CD4-positive, alpha-beta memory T cell (primary cell): ENCODE measurements at regions of chr1 and their contacts with region 1.

Region 1: DNA sequence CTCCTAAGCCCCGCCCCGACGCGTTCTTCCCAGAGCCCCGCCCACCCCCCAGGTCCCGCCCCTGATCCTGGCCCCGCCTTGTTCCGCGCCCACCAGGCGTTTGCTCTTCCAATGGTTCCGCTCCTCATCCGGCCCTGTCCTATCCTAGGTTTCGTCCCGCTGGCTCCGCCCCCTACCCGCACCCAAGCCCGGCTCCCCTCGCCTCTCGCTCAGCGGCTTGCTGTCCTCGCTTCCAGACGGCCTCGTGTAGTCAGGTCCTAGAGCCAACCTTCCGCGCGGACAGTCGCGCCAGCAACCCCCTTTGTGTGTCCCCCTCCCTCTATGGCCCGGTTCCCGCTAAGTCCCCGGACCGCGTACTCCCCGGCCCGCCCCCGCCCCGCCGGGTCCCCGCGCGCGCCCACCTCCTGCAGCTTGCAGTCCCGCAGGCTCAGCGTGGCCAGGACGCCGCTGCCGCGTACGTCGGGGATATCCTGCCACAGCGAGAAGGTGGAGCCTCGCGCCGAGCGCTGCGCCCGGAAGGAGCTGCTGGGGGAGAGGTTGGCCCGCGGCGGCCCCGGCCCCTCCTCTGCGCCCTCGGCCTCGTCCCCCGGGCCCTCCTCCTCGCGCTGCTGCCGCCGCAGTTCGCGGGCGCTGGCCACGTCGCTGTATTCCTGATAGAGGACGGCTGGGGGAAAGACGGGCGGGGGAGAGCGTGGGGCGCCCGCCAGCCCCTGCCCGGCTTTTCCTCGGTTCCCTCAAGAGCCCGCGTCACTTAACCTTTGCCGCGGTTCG is 5.7 kb downstream of the ARHGEF19 start:
- DNase-seq: peak; percentile 93 to 97 (median 94)
- H3K4me3 ChIP-seq: peak overlapping the region; percentile 52 to 61
- H3K4me3 Mint-ChIP-seq: peak overlapping the region; percentile 89 to 97 (median 90)
- H3K27ac ChIP-seq: peak overlapping the region; percentile 76
- H3K27ac Mint-ChIP-seq: peak overlapping the region; percentile 94 to 98 (median 97)
- H3K4me1 ChIP-seq: peaks cover 20% of the 10 kb centered on the region
- H3K4me1 Mint-ChIP-seq: peaks cover 1 to 36% (median 16%) of the 10 kb centered on the region in 4 donors
- H3K27me3 ChIP-seq: no peaks in the 10 kb centered on the region
- H3K27me3 Mint-ChIP-seq: no peaks in the 10 kb centered on the region

Region 2: DNA sequence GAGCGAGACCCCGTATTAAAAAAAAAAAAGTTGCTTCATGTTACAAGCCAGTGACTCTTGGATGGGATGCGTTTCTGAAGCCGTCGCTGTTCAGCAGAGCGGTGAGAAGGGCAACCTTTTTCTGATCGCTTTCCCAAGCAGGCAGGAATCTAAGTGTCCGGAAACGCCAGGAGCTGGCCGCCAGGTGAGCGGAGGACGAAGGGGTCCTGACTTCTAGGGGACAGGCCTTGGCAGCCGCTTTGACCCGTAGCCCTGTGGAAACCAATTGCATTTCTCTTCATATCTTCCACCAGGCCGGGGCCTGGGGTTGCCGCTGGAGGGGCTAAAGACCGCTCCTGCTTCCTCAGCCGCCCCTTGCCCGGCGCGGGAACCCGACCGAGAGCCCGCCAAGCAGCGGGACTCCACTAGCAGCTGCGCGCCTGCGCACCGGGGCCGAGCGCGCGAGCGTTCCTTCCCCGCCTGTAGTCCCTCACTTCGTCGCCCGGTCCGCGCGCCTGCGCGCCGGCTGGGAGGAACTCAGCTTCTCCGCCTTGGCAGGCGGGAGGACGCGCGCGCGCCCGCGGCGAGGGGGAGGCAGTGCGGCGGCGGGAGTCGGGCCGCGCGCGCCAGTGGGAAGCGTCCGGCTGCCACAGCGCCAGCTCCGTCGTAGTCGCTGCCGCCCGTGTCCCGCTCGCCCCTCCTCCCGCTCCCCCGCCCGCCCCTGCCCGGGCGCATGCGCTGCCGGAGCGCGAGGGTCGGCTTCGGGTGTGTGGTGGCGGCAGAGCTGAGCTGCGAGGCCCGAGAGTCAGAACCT is 359.4 kb before region 1 on chr1 and contains the start of gene SPEN:
- CTCF ChIA-PET with region 1: no interaction called
- POLR2A ChIA-PET with region 1: no interaction called
- intact Hi-C with region 1: loop called (anchors 5 kb)
- DNase-seq: peak; percentile 98 to 99 (median 99)
- H3K4me3 ChIP-seq: peak within 1 kb of the TSS; percentile 62 to 65
- H3K4me3 Mint-ChIP-seq: peak within 1 kb of the TSS; percentile 95 to 99 (median 98)
- H3K27ac ChIP-seq: peak within 1 kb of the TSS; percentile 86
- H3K27ac Mint-ChIP-seq: peak within 1 kb of the TSS; percentile 97 to 99 (median 98)
- H3K4me1 ChIP-seq: peaks cover 52% of the 10 kb centered on the region
- H3K4me1 Mint-ChIP-seq: peaks cover 23 to 60% (median 35%) of the 10 kb centered on the region in 4 donors
- H3K27me3 ChIP-seq: no peaks in the 10 kb centered on the region
- H3K27me3 Mint-ChIP-seq: no peaks in the 10 kb centered on the region
- total RNA-seq, gene SPEN: 80.8 to 87.8 TPM

Region 3: GRCh38 chr1:15994590-15995351 is 212.0 kb before region 1 on chr1:
- CTCF ChIA-PET with region 1: no interaction called
- POLR2A ChIA-PET with region 1: no interaction called
- intact Hi-C with region 1: no loop called
- DNase-seq: peak in 3 of 5 donors; percentile 26 to 50 (median 32)
- H3K4me3 ChIP-seq: no peak overlapping the region
- H3K4me3 Mint-ChIP-seq: no peak overlapping the region
- H3K27ac ChIP-seq: no peak overlapping the region
- H3K27ac Mint-ChIP-seq: peak overlapping the region in 2 of 7 donors; percentile 10 to 61
- H3K4me1 ChIP-seq: no peaks in the 10 kb centered on the region
- H3K4me1 Mint-ChIP-seq: no peaks in the 10 kb centered on the region
- H3K27me3 ChIP-seq: no peaks in the 10 kb centered on the region
- H3K27me3 Mint-ChIP-seq: peaks cover 0 to 2% of the 10 kb centered on the region in 2 donors

Region 4: DNA sequence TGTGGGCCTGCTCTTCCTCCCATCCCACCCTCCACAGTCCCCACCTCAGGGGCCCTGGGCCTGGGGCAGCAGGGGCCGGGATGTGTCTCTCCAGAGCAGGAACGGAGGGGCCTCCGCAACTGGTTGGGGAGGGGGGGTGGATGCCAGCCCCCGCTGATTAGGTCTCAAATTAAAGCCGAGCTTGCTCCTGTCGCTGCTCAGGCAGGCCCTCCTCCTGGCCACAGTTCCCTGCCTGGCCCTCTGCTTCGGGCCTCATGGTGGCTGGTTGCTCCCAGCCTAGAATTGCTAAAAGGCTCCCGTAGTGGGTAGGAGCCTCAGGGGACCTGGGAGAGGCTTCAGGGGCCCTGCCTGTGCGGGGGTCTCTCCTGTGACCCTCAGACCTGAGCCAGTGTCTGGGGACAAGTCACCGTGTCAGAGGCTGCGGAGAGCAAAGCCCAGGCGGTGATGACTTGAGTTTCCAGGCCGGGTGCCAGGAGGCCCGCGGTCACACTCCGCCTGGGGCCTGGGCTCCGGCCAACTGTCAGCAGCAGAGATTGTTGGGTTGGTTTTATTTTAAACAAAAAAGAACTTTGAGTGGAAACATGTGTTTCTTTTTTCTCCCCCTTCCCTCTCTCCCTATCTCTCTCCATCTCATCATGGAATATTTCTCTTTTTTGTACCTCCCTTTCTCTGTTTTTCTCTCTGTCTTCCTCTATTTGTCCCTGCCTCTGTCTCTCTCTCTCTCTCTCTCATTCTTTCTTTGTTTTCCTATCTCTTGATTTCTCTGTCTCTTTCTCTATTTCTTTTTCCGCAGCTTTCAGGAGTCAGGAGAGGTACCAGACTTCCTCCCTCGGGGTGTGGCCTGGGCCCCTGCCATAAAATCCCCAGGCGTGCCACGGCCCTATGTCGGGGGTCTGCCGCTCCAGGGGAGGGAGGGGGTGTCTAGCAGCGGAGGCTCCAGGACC is 30.9 kb before region 1 on chr1:
- CTCF ChIA-PET with region 1: no interaction called
- POLR2A ChIA-PET with region 1: no interaction called
- intact Hi-C with region 1: no loop called
- DNase-seq: no peak
- H3K4me3 ChIP-seq: no peak overlapping the region
- H3K4me3 Mint-ChIP-seq: no peak overlapping the region
- H3K27ac ChIP-seq: no peak overlapping the region
- H3K27ac Mint-ChIP-seq: peak overlapping the region in 1 of 7 donors; percentile 57
- H3K4me1 ChIP-seq: no peaks in the 10 kb centered on the region
- H3K4me1 Mint-ChIP-seq: no peaks in the 10 kb centered on the region
- H3K27me3 ChIP-seq: no peaks in the 10 kb centered on the region
- H3K27me3 Mint-ChIP-seq: peaks cover 0 to 2% of the 10 kb centered on the region in 2 donors

Region 5: GRCh38 chr1:16187748-16188401 is 18.9 kb before region 1 on chr1:
- CTCF ChIA-PET with region 1: interaction called, 17 read pairs
- POLR2A ChIA-PET with region 1: no interaction called
- intact Hi-C with region 1: no loop called
- DNase-seq: peak; percentile 63 to 79 (median 71)
- H3K4me3 ChIP-seq: no peak overlapping the region
- H3K4me3 Mint-ChIP-seq: no peak overlapping the region
- H3K27ac ChIP-seq: no peak overlapping the region
- H3K27ac Mint-ChIP-seq: no peak overlapping the region
- H3K4me1 ChIP-seq: peaks cover 5% of the 10 kb centered on the region
- H3K4me1 Mint-ChIP-seq: peaks cover 2 to 4% (median 3%) of the 10 kb centered on the region in 4 donors
- H3K27me3 ChIP-seq: no peaks in the 10 kb centered on the region
- H3K27me3 Mint-ChIP-seq: peaks cover 8 to 10% of the 10 kb centered on the region in 2 donors

Region 6: GRCh38 chr1:16236511-16237342 is 30.0 kb after region 1 on chr1 and contains the start of gene CPLANE2:
- CTCF ChIA-PET with region 1: interaction called, 31 read pairs
- POLR2A ChIA-PET with region 1: interaction called, 12 read pairs
- intact Hi-C with region 1: loop called (anchors 1 kb)
- DNase-seq: peak; percentile 93 to 96 (median 94)
- H3K4me3 ChIP-seq: peak within 1 kb of the TSS; percentile 68 to 72
- H3K4me3 Mint-ChIP-seq: peak within 1 kb of the TSS; percentile 83 to 97 (median 91)
- H3K27ac ChIP-seq: peak within 1 kb of the TSS; percentile 82
- H3K27ac Mint-ChIP-seq: peak within 1 kb of the TSS; percentile 94 to 99 (median 97)
- H3K4me1 ChIP-seq: peaks cover 24% of the 10 kb centered on the region
- H3K4me1 Mint-ChIP-seq: peaks cover 12 to 23% (median 18%) of the 10 kb centered on the region in 4 donors
- H3K27me3 ChIP-seq: no peaks in the 10 kb centered on the region
- H3K27me3 Mint-ChIP-seq: no peaks in the 10 kb centered on the region
- total RNA-seq, gene CPLANE2: 11.5 to 13.6 TPM

Region 7: GRCh38 chr1:16351994-16352841 is 145.5 kb after region 1 on chr1 and contains the start of gene FBXO42:
- CTCF ChIA-PET with region 1: no interaction called
- POLR2A ChIA-PET with region 1: no interaction called
- intact Hi-C with region 1: loop called (anchors 5 kb)
- DNase-seq: peak; percentile 90 to 95 (median 94)
- H3K4me3 ChIP-seq: peak within 1 kb of the TSS; percentile 88 to 90
- H3K4me3 Mint-ChIP-seq: peak within 1 kb of the TSS; percentile 89 to 97 (median 96)
- H3K27ac ChIP-seq: peak within 1 kb of the TSS; percentile 95
- H3K27ac Mint-ChIP-seq: peak within 1 kb of the TSS; percentile 90 to 98 (median 95)
- H3K4me1 ChIP-seq: peaks cover 44% of the 10 kb centered on the region
- H3K4me1 Mint-ChIP-seq: peaks cover 17 to 37% (median 30%) of the 10 kb centered on the region in 4 donors
- H3K27me3 ChIP-seq: no peaks in the 10 kb centered on the region
- H3K27me3 Mint-ChIP-seq: no peaks in the 10 kb centered on the region
- total RNA-seq, gene FBXO42: 21.6 to 25.6 TPM